ENCODE measurements at regions of chr21 and their contacts with region 1.

Region 1: GRCh38 chr21:33641336-33642026 is at the start of gene CRYZL1:
- DNase-seq: peak; percentile 100
- ATAC-seq: peak; percentile 89 to 94 (median 92)
- H3K4me3 ChIP-seq: peak within 1 kb of the TSS; percentile 71 to 93 (median 89)
- H3K27ac ChIP-seq: peak within 1 kb of the TSS; percentile 59 to 97 (median 88)
- H3K4me1 ChIP-seq: peaks cover 0 to 41% (median 20%) of the 10 kb centered on the region in 12 donors
- H3K27me3 ChIP-seq: no peaks in the 10 kb centered on the region
- CTCF ChIP-seq: no peak
- POLR2A ChIP-seq: peak in 1 of 2 donors; percentile 60
- total RNA-seq, gene CRYZL1: 15.2 to 33.8 (median 25.3) TPM

Region 2: GRCh38 chr21:33691945-33692603 is 50.6 kb after region 1 on chr21:
- intact Hi-C with region 1: loop called in 3 of 10 experiments (anchors 5 to 10 kb)
- DNase-seq: no peak
- ATAC-seq: no peak
- H3K4me3 ChIP-seq: no peak overlapping the region
- H3K27ac ChIP-seq: peak overlapping the region in 1 of 12 donors; percentile 15
- H3K4me1 ChIP-seq: peaks cover 0 to 54% (median 27%) of the 10 kb centered on the region in 12 donors
- H3K27me3 ChIP-seq: no peaks in the 10 kb centered on the region
- CTCF ChIP-seq: no peak
- POLR2A ChIP-seq: no peak

Region 3: DNA sequence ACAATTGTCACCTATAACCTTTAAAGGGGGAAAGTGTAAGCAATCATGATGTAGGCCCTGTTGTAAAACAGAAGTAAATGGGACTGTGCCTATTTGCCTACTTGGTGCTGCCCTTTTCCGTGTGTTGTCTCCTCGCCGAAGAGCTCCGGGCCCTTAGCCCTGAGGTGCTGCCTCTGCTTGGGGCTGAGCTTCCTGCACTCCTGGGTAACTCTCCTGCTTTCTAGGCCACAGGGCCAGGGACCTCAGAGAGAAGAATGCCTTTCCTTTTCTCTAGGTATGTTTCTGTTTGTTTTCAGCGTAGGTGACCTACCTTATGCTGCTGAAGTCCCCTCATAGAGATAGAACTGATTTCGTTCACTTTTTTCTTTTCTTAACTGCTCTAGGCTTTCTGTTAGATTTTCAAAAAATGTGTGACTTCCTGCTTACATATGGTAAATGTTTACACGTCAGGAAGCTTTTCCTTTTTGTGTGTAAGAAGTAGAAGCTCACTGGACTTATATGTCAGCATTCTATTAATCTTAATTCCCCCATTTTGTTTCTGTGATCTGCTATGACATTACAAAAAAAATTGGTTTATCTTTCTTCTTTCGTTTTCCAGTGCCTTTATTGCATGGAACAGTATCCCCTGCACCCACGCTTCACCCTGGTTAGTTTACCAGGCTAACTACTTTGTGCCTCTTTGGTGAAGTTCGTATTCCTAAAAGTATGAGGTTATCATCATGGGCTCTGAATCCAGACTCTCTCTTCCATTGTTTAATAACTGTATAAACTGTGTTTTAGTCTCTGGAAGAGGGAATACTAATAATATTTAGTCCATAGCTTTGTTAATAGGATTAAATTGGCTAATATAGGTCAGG is 62.5 kb after region 1 on chr21:
- intact Hi-C with region 1: loop called in 3 of 10 experiments (anchors 5 to 10 kb)
- DNase-seq: no peak
- ATAC-seq: peak in 2 of 4 donors; percentile 48 to 52
- H3K4me3 ChIP-seq: peak overlapping the region in 8 of 12 donors; percentile 5 to 30 (median 16)
- H3K27ac ChIP-seq: peak overlapping the region in 3 of 12 donors; percentile 19 to 39 (median 28)
- H3K4me1 ChIP-seq: peaks cover 0 to 28% (median 12%) of the 10 kb centered on the region in 12 donors
- H3K27me3 ChIP-seq: no peaks in the 10 kb centered on the region
- CTCF ChIP-seq: no peak
- POLR2A ChIP-seq: no peak

Region 4: DNA sequence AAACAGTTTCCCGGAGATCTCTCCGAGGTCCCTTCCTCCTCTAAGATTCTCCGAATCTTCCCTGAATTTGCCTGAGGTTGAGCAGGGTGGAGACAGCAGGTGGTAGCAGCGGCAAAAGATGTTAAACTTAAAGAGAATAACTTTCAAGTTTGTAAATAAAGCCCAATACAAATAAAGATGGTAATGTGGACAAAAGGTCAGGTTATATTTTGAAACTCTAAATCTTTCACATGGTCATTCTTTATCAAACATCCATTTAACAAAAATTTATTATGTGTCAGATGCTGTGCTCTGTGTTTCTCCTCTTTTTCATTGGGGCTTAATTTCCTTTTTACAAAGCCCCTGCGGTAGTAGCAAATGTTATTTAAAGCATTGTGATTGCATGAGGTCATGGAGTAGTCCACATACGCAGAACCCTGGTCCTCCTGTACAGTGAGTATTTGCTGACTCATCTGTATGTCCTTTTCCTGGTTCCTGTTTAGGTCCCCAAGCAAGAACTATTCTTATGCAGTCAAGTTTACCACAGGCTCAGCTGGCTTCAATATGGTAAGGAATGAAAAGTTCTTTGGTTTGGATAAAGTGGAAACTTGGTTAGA is 120.1 kb after region 1 on chr21:
- intact Hi-C with region 1: loop called in 6 of 10 experiments (anchors 5 to 10 kb)
- DNase-seq: peak in 2 of 5 donors; percentile 32 to 40
- ATAC-seq: peak; percentile 85 to 96 (median 94)
- H3K4me3 ChIP-seq: peak overlapping the region in 8 of 12 donors; percentile 3 to 35 (median 20)
- H3K27ac ChIP-seq: peak overlapping the region; percentile 26 to 82 (median 53)
- H3K4me1 ChIP-seq: peaks cover 0 to 27% (median 14%) of the 10 kb centered on the region in 12 donors
- H3K27me3 ChIP-seq: no peaks in the 10 kb centered on the region
- CTCF ChIP-seq: no peak
- POLR2A ChIP-seq: no peak

Region 5: GRCh38 chr21:33836408-33836807 is 194.9 kb after region 1 on chr21:
- intact Hi-C with region 1: no loop called
- DNase-seq: no peak
- ATAC-seq: peak in 1 of 4 donors; percentile 47
- H3K4me3 ChIP-seq: no peak overlapping the region
- H3K27ac ChIP-seq: peak overlapping the region in 1 of 12 donors; percentile 77
- H3K4me1 ChIP-seq: peaks cover 0 to 5% (median 0%) of the 10 kb centered on the region in 12 donors
- H3K27me3 ChIP-seq: no peaks in the 10 kb centered on the region
- CTCF ChIP-seq: no peak
- POLR2A ChIP-seq: no peak

Region 6: GRCh38 chr21:33894736-33895288 is 253.3 kb after region 1 on chr21:
- intact Hi-C with region 1: loop called in 8 of 10 experiments (anchors 5 to 10 kb)
- DNase-seq: peak; percentile 77 to 85 (median 77)
- ATAC-seq: peak; percentile 58 to 92 (median 88)
- H3K4me3 ChIP-seq: peak overlapping the region in 10 of 12 donors; percentile 15 to 53 (median 40)
- H3K27ac ChIP-seq: peak overlapping the region in 1 of 12 donors; percentile 6
- H3K4me1 ChIP-seq: peaks cover 0 to 17% (median 4%) of the 10 kb centered on the region in 12 donors
- H3K27me3 ChIP-seq: no peaks in the 10 kb centered on the region
- CTCF ChIP-seq: peak; percentile 33 to 77 (median 59)
- POLR2A ChIP-seq: no peak